ENCODE measurements at regions of chr18 and their contacts with region 1.

Region 1: DNA sequence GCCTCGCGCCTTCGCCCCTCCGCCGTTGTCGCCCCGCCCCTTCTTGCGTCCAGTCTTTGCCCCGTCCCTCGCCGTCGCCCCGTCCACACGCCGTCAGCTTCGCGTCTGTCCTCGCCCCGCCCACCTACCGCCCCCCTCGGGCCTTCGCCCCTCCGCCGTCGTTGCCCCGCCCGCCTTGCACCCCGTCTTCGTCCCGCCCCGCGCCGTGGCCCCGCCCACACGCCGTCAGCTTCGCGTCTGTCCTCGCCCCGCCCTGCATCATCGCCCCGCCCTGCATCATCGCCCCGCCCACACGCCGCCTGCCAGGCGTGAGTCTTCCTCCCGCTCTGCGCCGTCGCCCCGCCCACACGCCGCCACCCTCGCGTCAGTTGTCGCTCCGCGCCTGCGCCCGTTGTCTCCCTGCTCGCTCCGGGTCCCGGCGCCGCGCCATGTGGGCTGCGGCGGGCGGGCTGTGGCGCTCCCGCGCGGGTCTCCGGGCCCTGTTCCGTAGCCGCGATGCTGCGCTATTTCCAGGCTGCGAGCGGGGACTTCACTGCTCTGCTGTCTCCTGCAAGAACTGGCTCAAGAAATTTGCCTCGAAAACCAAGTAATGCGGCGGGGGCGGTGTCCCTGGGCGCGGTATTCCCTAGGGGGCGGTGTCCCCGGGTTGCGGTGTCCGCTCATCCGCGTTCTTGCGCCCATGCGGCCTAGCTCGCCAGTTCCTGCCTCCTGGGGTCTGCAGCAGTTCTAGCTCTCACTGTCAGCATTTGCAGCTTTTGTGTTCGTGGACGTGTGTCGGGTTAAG is at the start of gene RBFA:
- DNase-seq: peak; percentile 99 to 100 (median 100)
- H3K4me3 ChIP-seq: peak within 1 kb of the TSS; percentile 60
- H3K27ac ChIP-seq: peak within 1 kb of the TSS; percentile 76 to 77
- H3K4me1 ChIP-seq: peaks cover 2% of the 10 kb centered on the region
- H3K27me3 ChIP-seq: no peaks in the 10 kb centered on the region
- CTCF ChIP-seq: peak in 2 of 3 donors; percentile 20 to 55
- EP300 ChIP-seq: no peak
- POLR2A ChIP-seq: peak; percentile 31
- total RNA-seq, gene RBFA: 13.7 to 31.9 (median 18.2) TPM

Region 2: GRCh38 chr18:79924814-79925731 is 109.2 kb before region 1 on chr18:
- intact Hi-C with region 1: loop called in 1 of 4 experiments (anchors 10 kb)
- DNase-seq: peak; percentile 67 to 91 (median 84)
- H3K4me3 ChIP-seq: no peak overlapping the region
- H3K27ac ChIP-seq: peak overlapping the region in 1 of 2 donors; percentile 3
- H3K4me1 ChIP-seq: peaks cover 13% of the 10 kb centered on the region
- H3K27me3 ChIP-seq: no peaks in the 10 kb centered on the region
- CTCF ChIP-seq: peak in 1 of 3 donors; percentile 18
- EP300 ChIP-seq: no peak
- POLR2A ChIP-seq: no peak

Region 3: DNA sequence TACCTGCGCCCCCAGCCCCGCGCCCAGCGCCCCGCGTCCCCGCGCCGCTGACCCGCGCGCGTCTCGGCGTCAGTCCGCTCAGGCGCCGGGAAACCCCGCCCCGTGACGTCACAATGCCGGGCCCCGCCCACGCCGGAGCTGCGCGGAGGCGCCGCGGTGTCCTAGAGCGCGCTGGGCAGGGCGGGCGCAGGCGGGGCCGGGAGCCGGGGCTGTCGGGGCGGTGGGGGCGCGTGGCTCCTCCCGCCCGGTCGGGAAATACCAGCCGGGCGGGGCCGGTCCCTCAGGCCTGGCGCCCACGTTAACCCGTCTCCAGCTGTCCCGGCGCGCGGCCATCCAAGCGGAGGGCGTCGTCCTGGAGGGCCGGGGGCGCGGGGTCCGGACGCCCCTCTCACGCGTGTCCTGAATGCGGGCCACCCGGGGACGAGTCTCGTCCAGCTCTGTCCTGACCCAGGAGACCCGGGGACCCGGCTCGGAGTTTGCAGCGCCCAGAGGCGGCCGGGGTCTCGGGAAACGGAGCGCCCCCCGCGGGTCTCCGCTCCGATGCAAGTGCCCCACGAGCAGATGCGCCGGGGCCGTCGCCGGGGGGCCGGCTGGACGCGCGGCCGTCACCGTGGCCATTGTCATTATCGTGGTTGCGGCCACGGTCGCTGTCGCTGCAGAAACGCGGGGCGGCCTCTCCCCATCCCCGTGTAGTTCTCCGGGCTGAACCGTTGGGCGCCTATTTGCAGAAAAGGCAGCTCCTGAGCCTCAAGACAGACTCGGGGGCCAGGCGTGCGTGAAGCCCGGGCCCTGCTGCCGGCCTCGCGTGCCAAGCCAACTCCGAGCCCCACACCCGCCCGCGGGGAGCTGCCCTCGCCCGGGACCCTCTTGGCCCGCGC is 82.4 kb before region 1 on chr18 and contains the start of gene SLC66A2:
- intact Hi-C with region 1: loop called in 1 of 4 experiments (anchors 5 kb)
- DNase-seq: peak; percentile 89 to 97 (median 95)
- H3K4me3 ChIP-seq: peak within 1 kb of the TSS; percentile 59
- H3K27ac ChIP-seq: peak within 1 kb of the TSS in 1 of 2 donors; percentile 56
- H3K4me1 ChIP-seq: peaks cover 13% of the 10 kb centered on the region
- H3K27me3 ChIP-seq: no peaks in the 10 kb centered on the region
- CTCF ChIP-seq: no peak
- EP300 ChIP-seq: no peak
- POLR2A ChIP-seq: peak; percentile 61
- total RNA-seq, gene SLC66A2: 16.3 to 31.1 (median 27.0) TPM

Region 4: GRCh38 chr18:79988451-79989194 is 45.6 kb before region 1 on chr18 and contains the start of gene TXNL4A:
- intact Hi-C with region 1: loop called in 1 of 4 experiments (anchors 10 kb)
- DNase-seq: peak; percentile 74 to 91 (median 78)
- H3K4me3 ChIP-seq: peak within 1 kb of the TSS; percentile 59
- H3K27ac ChIP-seq: peak within 1 kb of the TSS; percentile 91 to 97
- H3K4me1 ChIP-seq: peaks cover 3% of the 10 kb centered on the region
- H3K27me3 ChIP-seq: no peaks in the 10 kb centered on the region
- CTCF ChIP-seq: no peak
- EP300 ChIP-seq: no peak
- POLR2A ChIP-seq: peak; percentile 77
- total RNA-seq, gene TXNL4A: 9.4 to 57.1 (median 42.3) TPM

Region 5: DNA sequence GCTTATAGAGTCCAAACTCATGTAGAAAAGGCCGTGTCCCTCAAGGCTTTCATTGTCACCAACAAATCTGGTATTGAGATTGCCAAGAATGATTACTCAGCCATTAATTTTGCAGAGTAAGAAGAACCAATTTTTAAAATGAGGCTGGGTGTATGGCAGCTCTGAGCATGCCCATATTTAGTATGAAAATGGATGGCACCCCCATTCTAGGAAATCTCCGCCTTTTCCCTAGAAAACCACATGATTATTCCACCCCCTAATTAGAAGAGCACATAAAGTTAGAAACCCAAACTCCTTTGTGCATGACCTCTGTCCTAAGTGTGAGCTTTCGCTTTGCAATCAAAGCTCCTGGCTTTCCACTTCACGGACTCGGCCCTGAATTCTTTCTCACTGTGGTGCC is 31.8 kb before region 1 on chr18:
- intact Hi-C with region 1: no loop called
- DNase-seq: no peak
- H3K4me3 ChIP-seq: no peak overlapping the region
- H3K27ac ChIP-seq: no peak overlapping the region
- H3K4me1 ChIP-seq: no peaks in the 10 kb centered on the region
- H3K27me3 ChIP-seq: no peaks in the 10 kb centered on the region
- CTCF ChIP-seq: no peak
- EP300 ChIP-seq: no peak
- POLR2A ChIP-seq: no peak

Region 6: GRCh38 chr18:80108728-80109675 is 74.7 kb after region 1 on chr18 and contains the start of gene ADNP2:
- intact Hi-C with region 1: loop called in 2 of 4 experiments (anchors 5 to 10 kb)
- DNase-seq: peak; percentile 75 to 86 (median 80)
- H3K4me3 ChIP-seq: peak within 1 kb of the TSS; percentile 66
- H3K27ac ChIP-seq: peak within 1 kb of the TSS; percentile 93 to 96
- H3K4me1 ChIP-seq: peaks cover 2% of the 10 kb centered on the region
- H3K27me3 ChIP-seq: no peaks in the 10 kb centered on the region
- CTCF ChIP-seq: no peak
- EP300 ChIP-seq: no peak
- POLR2A ChIP-seq: peak; percentile 42
- total RNA-seq, gene ADNP2: 11.5 to 24.6 (median 17.0) TPM

Region 7: DNA sequence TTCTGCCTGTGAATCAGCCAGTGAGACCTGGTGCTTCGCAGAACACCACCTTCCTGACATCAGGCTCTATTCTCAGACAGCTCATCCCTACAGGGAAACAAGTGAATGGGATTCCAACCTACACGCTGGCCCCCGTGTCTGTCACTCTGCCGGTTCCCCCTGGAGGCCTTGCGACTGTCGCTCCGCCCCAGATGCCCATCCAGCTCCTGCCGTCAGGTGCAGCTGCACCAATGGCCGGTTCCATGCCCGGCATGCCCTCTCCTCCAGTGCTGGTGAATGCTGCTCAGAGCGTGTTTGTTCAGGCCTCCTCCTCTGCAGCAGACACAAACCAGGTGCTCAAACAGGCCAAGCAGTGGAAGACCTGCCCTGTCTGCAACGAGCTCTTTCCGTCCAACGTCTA is 102.9 kb after region 1 on chr18:
- intact Hi-C with region 1: no loop called
- DNase-seq: no peak
- H3K4me3 ChIP-seq: no peak overlapping the region
- H3K27ac ChIP-seq: no peak overlapping the region
- H3K4me1 ChIP-seq: no peaks in the 10 kb centered on the region
- H3K27me3 ChIP-seq: no peaks in the 10 kb centered on the region
- CTCF ChIP-seq: no peak
- EP300 ChIP-seq: no peak
- POLR2A ChIP-seq: no peak

Region 8: GRCh38 chr18:80147418-80148325 is 113.4 kb after region 1 on chr18:
- intact Hi-C with region 1: loop called in 1 of 4 experiments (anchors 5 kb)
- DNase-seq: peak; percentile 81 to 93 (median 90)
- H3K4me3 ChIP-seq: peak overlapping the region; percentile 54
- H3K27ac ChIP-seq: peak overlapping the region in 1 of 2 donors; percentile 68
- H3K4me1 ChIP-seq: peaks cover 2% of the 10 kb centered on the region
- H3K27me3 ChIP-seq: no peaks in the 10 kb centered on the region
- CTCF ChIP-seq: no peak
- EP300 ChIP-seq: no peak
- POLR2A ChIP-seq: no peak